SK-MEL-5 (cell line): ENCODE measurements at regions of chr10 and their contacts with region 1.

Region 1: GRCh38 chr10:102503281-102504220 is at the start of gene SUFU:
- DNase-seq: peak; percentile 97
- total RNA-seq, gene SUFU: 1.8 TPM in 2 replicates

Region 2: DNA sequence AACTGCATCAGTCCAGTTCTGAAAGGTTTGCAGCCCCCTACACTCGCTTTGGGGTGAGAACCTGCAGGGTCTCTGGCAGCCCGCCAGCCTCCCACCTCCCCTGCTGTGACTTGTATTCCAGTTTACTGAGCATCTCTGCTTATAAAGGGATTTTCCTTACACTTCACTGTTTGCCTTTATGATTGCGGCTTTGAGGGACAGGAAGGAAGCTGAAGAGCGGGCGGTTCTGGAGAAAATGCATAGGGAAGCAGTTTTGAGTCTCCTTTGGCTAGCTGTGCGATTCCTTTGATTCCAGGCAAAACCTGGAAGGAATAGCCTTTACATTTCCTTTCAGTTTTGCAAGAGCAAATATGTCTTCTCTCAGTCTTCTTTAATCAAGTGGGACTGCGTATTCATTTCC is 75.8 kb after region 1 on chr10:
- in situ Hi-C with region 1: loop called (anchors 10 kb)
- DNase-seq: no peak